CD4-positive, alpha-beta memory T cell (primary cell): ENCODE measurements at regions of chrX and their contacts with region 1.

Region 1: DNA sequence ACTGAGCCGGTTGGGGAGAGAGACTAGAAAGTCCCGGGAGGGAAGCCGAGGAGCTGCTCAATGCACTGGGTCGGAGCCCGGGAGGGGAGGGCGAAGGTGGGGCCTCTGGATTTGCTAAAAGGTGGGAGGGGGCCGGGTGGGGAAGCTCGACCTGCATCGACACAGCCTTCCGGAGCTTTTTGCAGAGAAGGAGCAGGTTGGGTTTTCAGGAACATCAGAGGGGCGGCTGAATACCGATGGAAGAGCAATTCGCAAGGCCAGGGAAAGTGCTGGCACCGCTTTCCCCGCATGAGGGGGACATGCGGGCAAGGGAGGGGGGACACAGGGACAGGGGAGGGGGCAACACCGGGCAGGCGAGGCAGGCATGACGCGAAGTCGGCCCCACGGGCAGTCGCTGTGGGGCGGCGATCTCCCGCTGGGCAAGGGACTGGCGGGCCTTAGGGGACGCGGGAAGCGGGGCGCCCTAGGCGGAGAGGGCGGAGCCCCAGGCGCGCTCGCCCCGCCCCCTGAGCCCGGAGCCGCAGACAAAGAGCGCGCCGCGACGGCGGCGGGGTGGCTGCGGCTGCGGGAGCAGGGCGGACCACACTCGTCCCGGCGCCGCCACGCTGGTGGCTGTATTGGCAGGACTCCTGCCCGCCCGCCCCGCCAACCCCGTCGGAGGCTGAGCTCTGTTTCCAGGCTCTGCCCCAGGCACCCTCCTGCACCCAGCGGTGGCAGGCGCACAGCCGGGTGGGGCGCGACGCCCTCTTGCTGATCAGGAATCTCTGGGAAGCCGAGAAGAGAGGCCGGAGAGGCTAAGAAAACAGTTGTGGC is 11.6 kb downstream of the PDZD4 start:
- DNase-seq: peak; percentile 45 to 53 (median 49)
- H3K4me3 ChIP-seq: no peak overlapping the region
- H3K4me3 Mint-ChIP-seq: peak overlapping the region; percentile 43 to 74 (median 56)
- H3K27ac ChIP-seq: no peak overlapping the region
- H3K27ac Mint-ChIP-seq: no peak overlapping the region
- H3K4me1 ChIP-seq: peaks cover 59% of the 10 kb centered on the region
- H3K4me1 Mint-ChIP-seq: peaks cover 33 to 62% (median 47%) of the 10 kb centered on the region in 4 donors
- H3K27me3 ChIP-seq: no peaks in the 10 kb centered on the region
- H3K27me3 Mint-ChIP-seq: no peaks in the 10 kb centered on the region

Region 2: GRCh38 chrX:153438531-153438930 is 380.2 kb before region 1 on chrX:
- CTCF ChIA-PET with region 1: no interaction called
- POLR2A ChIA-PET with region 1: no interaction called
- intact Hi-C with region 1: no loop called
- DNase-seq: no peak
- H3K4me3 ChIP-seq: no peak overlapping the region
- H3K4me3 Mint-ChIP-seq: no peak overlapping the region
- H3K27ac ChIP-seq: no peak overlapping the region
- H3K27ac Mint-ChIP-seq: no peak overlapping the region
- H3K4me1 ChIP-seq: no peaks in the 10 kb centered on the region
- H3K4me1 Mint-ChIP-seq: no peaks in the 10 kb centered on the region
- H3K27me3 ChIP-seq: no peaks in the 10 kb centered on the region
- H3K27me3 Mint-ChIP-seq: peaks cover 0 to 1% of the 10 kb centered on the region in 2 donors

Region 3: GRCh38 chrX:153794018-153794896 is 24.5 kb before region 1 on chrX and contains the starts of genes IDH3G and SSR4:
- CTCF ChIA-PET with region 1: no interaction called
- POLR2A ChIA-PET with region 1: interaction called, 4 read pairs
- intact Hi-C with region 1: loop called (anchors 2 kb)
- DNase-seq: peak; percentile 93 to 95 (median 94)
- H3K4me3 ChIP-seq: peak within 1 kb of the TSS; percentile 63 to 69
- H3K4me3 Mint-ChIP-seq: peak within 1 kb of the TSS; percentile 89 to 95 (median 92)
- H3K27ac ChIP-seq: peak within 1 kb of the TSS; percentile 85
- H3K27ac Mint-ChIP-seq: peak within 1 kb of the TSS; percentile 90 to 95 (median 92)
- H3K4me1 ChIP-seq: peaks cover 43% of the 10 kb centered on the region
- H3K4me1 Mint-ChIP-seq: peaks cover 12 to 30% (median 21%) of the 10 kb centered on the region in 4 donors
- H3K27me3 ChIP-seq: no peaks in the 10 kb centered on the region
- H3K27me3 Mint-ChIP-seq: no peaks in the 10 kb centered on the region
- total RNA-seq, gene IDH3G: 39.9 to 45.5 TPM
- total RNA-seq, gene SSR4: 216 to 224 TPM

Region 4: GRCh38 chrX:153845842-153846241 is 27.1 kb after region 1 on chrX:
- CTCF ChIA-PET with region 1: no interaction called
- POLR2A ChIA-PET with region 1: no interaction called
- intact Hi-C with region 1: no loop called
- DNase-seq: no peak
- H3K4me3 ChIP-seq: no peak overlapping the region
- H3K4me3 Mint-ChIP-seq: no peak overlapping the region
- H3K27ac ChIP-seq: no peak overlapping the region
- H3K27ac Mint-ChIP-seq: no peak overlapping the region
- H3K4me1 ChIP-seq: no peaks in the 10 kb centered on the region
- H3K4me1 Mint-ChIP-seq: no peaks in the 10 kb centered on the region
- H3K27me3 ChIP-seq: no peaks in the 10 kb centered on the region
- H3K27me3 Mint-ChIP-seq: peaks cover 0 to 3% of the 10 kb centered on the region in 2 donors

Region 5: DNA sequence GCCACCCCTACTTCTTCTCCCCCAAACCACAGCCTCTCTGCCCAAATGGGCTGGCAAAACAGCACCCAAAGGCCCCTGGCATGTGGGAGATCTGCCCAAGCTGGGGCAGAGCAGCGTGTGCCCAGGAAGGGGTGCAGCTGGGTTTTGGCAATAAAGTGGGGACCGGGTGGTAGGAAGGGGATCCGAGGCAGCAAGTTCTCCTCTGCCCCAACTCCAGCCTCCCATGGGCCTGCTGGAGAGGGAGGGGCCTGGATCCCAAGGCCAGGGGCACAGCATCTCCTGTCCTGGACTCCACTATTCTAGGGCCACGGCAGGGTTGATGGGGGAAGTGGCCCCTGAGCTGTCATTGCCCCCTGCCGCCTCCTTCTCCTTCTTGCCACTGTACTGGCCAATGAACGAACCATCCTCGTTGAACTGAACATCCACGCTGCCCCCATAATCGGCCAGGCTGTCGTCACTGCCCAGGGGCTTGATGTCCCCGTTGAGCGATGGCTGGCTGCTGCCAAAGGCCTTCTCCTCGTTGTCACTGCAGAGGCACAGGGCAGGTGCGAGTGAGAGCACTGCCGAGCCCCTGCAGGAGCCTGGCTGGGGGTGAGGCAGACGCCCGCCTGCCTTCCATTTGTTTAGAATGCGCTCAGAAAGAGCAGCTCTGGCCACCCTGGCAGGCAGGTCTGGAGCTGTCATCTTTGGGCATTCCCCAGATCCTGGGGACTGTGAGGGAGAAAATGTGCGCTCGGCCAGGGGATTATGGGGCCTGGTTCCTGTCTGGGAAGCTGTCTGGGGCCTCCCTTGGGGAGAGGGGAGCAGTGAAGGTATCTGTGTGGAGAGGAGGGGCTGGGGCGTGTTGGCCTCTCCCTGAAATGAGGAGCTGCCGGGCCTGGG is 43.8 kb after region 1 on chrX:
- CTCF ChIA-PET with region 1: no interaction called
- POLR2A ChIA-PET with region 1: no interaction called
- intact Hi-C with region 1: no loop called
- DNase-seq: no peak
- H3K4me3 ChIP-seq: no peak overlapping the region
- H3K4me3 Mint-ChIP-seq: no peak overlapping the region
- H3K27ac ChIP-seq: no peak overlapping the region
- H3K27ac Mint-ChIP-seq: no peak overlapping the region
- H3K4me1 ChIP-seq: no peaks in the 10 kb centered on the region
- H3K4me1 Mint-ChIP-seq: peaks cover 0 to 5% (median 3%) of the 10 kb centered on the region in 4 donors
- H3K27me3 ChIP-seq: no peaks in the 10 kb centered on the region
- H3K27me3 Mint-ChIP-seq: no peaks in the 10 kb centered on the region

Region 6: GRCh38 chrX:153900831-153901752 is 82.3 kb after region 1 on chrX:
- CTCF ChIA-PET with region 1: no interaction called
- POLR2A ChIA-PET with region 1: interaction called, 3 read pairs
- intact Hi-C with region 1: loop called (anchors 5 kb)
- DNase-seq: peak; percentile 57 to 80 (median 67)
- H3K4me3 ChIP-seq: no peak overlapping the region
- H3K4me3 Mint-ChIP-seq: peak overlapping the region in 7 of 8 donors; percentile 57 to 86 (median 68)
- H3K27ac ChIP-seq: no peak overlapping the region
- H3K27ac Mint-ChIP-seq: peak overlapping the region in 6 of 7 donors; percentile 3 to 87 (median 72)
- H3K4me1 ChIP-seq: peaks cover 40% of the 10 kb centered on the region
- H3K4me1 Mint-ChIP-seq: peaks cover 24 to 47% (median 33%) of the 10 kb centered on the region in 4 donors
- H3K27me3 ChIP-seq: no peaks in the 10 kb centered on the region
- H3K27me3 Mint-ChIP-seq: no peaks in the 10 kb centered on the region

Region 7: DNA sequence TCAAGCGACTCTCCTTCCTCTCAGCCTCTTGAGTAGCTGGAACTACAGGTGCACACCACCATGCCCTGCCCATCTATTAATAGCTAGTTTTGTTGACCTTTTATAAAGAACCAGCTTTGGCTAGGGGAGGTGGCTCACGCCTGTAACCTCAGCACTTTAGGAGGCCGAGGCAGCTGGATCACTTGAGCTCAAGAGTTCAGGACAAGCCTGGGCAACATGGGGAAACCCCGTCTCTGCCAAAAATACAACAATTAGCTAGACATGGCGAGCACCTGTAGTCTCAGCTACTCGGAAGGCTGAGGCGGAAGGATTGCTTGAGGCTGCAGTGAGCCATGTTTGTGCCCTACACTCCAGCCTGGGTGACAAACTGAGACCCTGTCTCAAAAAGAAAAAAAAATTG is 479.5 kb after region 1 on chrX:
- CTCF ChIA-PET with region 1: no interaction called
- POLR2A ChIA-PET with region 1: no interaction called
- intact Hi-C with region 1: no loop called
- DNase-seq: no peak
- H3K4me3 ChIP-seq: no peak overlapping the region
- H3K4me3 Mint-ChIP-seq: no peak overlapping the region
- H3K27ac ChIP-seq: no peak overlapping the region
- H3K27ac Mint-ChIP-seq: no peak overlapping the region
- H3K4me1 ChIP-seq: peaks cover 5% of the 10 kb centered on the region
- H3K4me1 Mint-ChIP-seq: peaks cover 0 to 3% (median under 1%) of the 10 kb centered on the region in 4 donors
- H3K27me3 ChIP-seq: no peaks in the 10 kb centered on the region
- H3K27me3 Mint-ChIP-seq: no peaks in the 10 kb centered on the region